Natural killer cell (primary cell): ENCODE measurements at regions of chr10 and their contacts with region 1.

Region 1: GRCh38 chr10:14556285-14556956 is 218.3 kb downstream of the FAM107B start:
- DNase-seq: peak; percentile 58 to 72
- ATAC-seq: peak; percentile 63 to 79 (median 71)
- H3K4me3 ChIP-seq: no peak overlapping the region
- H3K4me3 Mint-ChIP-seq: peak overlapping the region; percentile 65
- H3K27ac ChIP-seq: peak overlapping the region; percentile 74
- H3K27ac Mint-ChIP-seq: peak overlapping the region; percentile 95 to 98
- H3K4me1 ChIP-seq: peaks cover 81% of the 10 kb centered on the region
- H3K4me1 Mint-ChIP-seq: peaks cover 91 to 92% of the 10 kb centered on the region in 2 donors
- H3K27me3 ChIP-seq: no peaks in the 10 kb centered on the region
- H3K27me3 Mint-ChIP-seq: no peaks in the 10 kb centered on the region
- CTCF ChIP-seq: peak; percentile 56

Region 2: DNA sequence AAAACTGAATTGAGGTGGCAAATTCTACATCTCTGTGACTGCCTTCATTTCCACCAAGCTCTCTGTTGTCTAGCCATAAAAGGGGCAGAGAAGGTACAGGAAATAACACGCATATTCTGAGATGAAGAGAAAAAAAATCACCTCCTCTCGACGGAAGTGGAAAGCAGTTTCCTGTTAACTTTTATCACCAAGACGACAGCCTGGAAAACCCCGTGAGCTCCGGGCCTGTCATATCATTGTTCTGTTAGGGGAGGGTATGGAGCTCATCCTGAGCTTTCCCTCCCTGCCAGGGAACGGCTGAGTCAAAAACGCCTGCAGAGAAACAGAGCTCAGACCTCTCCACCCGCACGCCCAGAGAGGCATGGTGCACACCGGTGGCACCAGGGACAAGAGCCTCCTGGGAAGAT is 769.4 kb before region 1 on chr10:
- intact Hi-C with region 1: loop called (anchors 10 kb)
- DNase-seq: peak; percentile 63 to 95
- ATAC-seq: peak; percentile 90 to 93 (median 92)
- H3K4me3 ChIP-seq: peak overlapping the region; percentile 4
- H3K4me3 Mint-ChIP-seq: peak overlapping the region; percentile 60
- H3K27ac ChIP-seq: peak overlapping the region; percentile 89
- H3K27ac Mint-ChIP-seq: no peak overlapping the region
- H3K4me1 ChIP-seq: peaks cover 36% of the 10 kb centered on the region
- H3K4me1 Mint-ChIP-seq: peaks cover 20 to 25% of the 10 kb centered on the region in 2 donors
- H3K27me3 ChIP-seq: no peaks in the 10 kb centered on the region
- H3K27me3 Mint-ChIP-seq: no peaks in the 10 kb centered on the region
- CTCF ChIP-seq: no peak

Region 3: DNA sequence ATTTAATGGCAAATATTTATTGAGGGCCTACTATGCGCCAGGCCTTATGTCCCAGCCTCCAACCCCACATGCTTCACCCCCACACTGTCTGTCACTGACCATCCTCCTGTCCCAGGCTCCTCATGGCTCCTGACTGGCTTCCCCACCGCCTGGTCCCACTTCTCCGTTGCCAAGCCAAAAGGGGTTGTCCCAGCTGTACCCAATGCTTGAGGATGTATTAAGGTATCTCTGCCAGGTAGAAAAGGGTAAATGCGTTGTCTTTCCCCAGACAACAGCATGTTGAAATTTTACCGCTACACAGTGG is 56.9 kb before region 1 on chr10:
- intact Hi-C with region 1: loop called (anchors 1 kb)
- DNase-seq: no peak
- ATAC-seq: no peak
- H3K4me3 ChIP-seq: no peak overlapping the region
- H3K4me3 Mint-ChIP-seq: no peak overlapping the region
- H3K27ac ChIP-seq: no peak overlapping the region
- H3K27ac Mint-ChIP-seq: no peak overlapping the region
- H3K4me1 ChIP-seq: peaks cover 7% of the 10 kb centered on the region
- H3K4me1 Mint-ChIP-seq: peaks cover 6 to 11% of the 10 kb centered on the region in 2 donors
- H3K27me3 ChIP-seq: no peaks in the 10 kb centered on the region
- H3K27me3 Mint-ChIP-seq: peaks cover 0 to 9% of the 10 kb centered on the region in 2 donors
- CTCF ChIP-seq: no peak

Region 4: GRCh38 chr10:14588084-14588937 is 31.9 kb after region 1 on chr10:
- intact Hi-C with region 1: loop called (anchors 5 kb)
- DNase-seq: peak in 1 of 2 donors; percentile 75
- ATAC-seq: peak; percentile 49 to 59 (median 53)
- H3K4me3 ChIP-seq: peak overlapping the region; percentile 15
- H3K4me3 Mint-ChIP-seq: peak overlapping the region; percentile 90
- H3K27ac ChIP-seq: peak overlapping the region; percentile 89
- H3K27ac Mint-ChIP-seq: peak overlapping the region; percentile 90 to 98
- H3K4me1 ChIP-seq: peaks cover 61% of the 10 kb centered on the region
- H3K4me1 Mint-ChIP-seq: peaks cover 65 to 69% of the 10 kb centered on the region in 2 donors
- H3K27me3 ChIP-seq: no peaks in the 10 kb centered on the region
- H3K27me3 Mint-ChIP-seq: no peaks in the 10 kb centered on the region
- CTCF ChIP-seq: no peak

Region 5: GRCh38 chr10:14659626-14660196 is 103.3 kb after region 1 on chr10:
- intact Hi-C with region 1: loop called (anchors 5 kb)
- DNase-seq: peak; percentile 52 to 68
- ATAC-seq: peak; percentile 78 to 88 (median 87)
- H3K4me3 ChIP-seq: no peak overlapping the region
- H3K4me3 Mint-ChIP-seq: peak overlapping the region; percentile 82
- H3K27ac ChIP-seq: peak overlapping the region; percentile 77
- H3K27ac Mint-ChIP-seq: peak overlapping the region; percentile 84 to 93
- H3K4me1 ChIP-seq: peaks cover 39% of the 10 kb centered on the region
- H3K4me1 Mint-ChIP-seq: peaks cover 74 to 85% of the 10 kb centered on the region in 2 donors
- H3K27me3 ChIP-seq: no peaks in the 10 kb centered on the region
- H3K27me3 Mint-ChIP-seq: no peaks in the 10 kb centered on the region
- CTCF ChIP-seq: no peak

Region 6: GRCh38 chr10:14878266-14879054 is 322.0 kb after region 1 on chr10 and contains the start of gene SUV39H2:
- intact Hi-C with region 1: loop called (anchors 5 kb)
- DNase-seq: peak; percentile 92 to 95
- ATAC-seq: peak; percentile 91 to 98 (median 94)
- H3K4me3 ChIP-seq: peak within 1 kb of the TSS; percentile 92
- H3K4me3 Mint-ChIP-seq: peak within 1 kb of the TSS; percentile 92
- H3K27ac ChIP-seq: peak within 1 kb of the TSS; percentile 59
- H3K27ac Mint-ChIP-seq: peak within 1 kb of the TSS; percentile 77 to 88
- H3K4me1 ChIP-seq: peaks cover 15% of the 10 kb centered on the region
- H3K4me1 Mint-ChIP-seq: peaks cover 26 to 28% of the 10 kb centered on the region in 2 donors
- H3K27me3 ChIP-seq: no peaks in the 10 kb centered on the region
- H3K27me3 Mint-ChIP-seq: no peaks in the 10 kb centered on the region
- CTCF ChIP-seq: no peak
- total RNA-seq, gene SUV39H2: 3.8 to 5.4 (median 5.2) TPM